Activated CD4-positive, alpha-beta T cell treated with anti-CD3 and anti-CD28 coated beads, Interleukin-2, amount 10 ng/mL, durations not matched to agents 24 days and 14 days (primary cell): ENCODE measurements at regions of chr19 and their contacts with region 1.

Region 1: DNA sequence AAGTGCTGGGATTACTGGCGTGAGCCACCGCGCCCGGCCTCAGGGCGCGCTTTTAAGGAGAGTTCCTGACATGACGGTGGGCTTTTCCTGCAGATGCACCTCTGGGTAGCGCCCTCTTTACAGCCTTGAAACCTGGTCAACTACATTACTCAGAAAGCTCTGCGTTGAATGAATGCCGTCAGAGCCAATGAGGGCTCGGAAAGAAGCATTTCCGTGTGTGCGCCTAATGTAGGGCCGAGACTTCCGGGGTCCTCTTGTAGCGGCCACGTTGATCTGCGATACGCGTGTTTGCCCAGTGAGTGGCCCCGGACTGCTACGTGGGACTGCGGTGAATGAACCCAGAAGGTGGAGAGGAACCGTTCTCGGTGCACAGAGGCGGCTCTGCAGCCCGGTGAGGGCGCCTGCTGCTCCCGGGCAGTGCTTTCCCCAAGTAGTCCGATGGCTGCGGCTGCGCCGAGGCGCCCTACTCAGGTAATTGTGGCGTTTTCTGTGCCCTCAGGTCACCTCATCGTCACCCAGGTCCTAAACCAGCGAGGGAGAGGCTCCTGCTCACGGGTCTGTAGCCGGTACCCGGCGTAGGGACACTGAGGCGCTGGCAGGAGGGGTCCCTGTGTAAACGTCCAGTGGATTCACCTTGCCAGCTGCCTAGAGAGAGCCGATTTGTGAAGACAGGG is 4.9 kb upstream of the ZNF552 start:
- DNase-seq: peak; percentile 94
- H3K4me3 Mint-ChIP-seq: peak overlapping the region; percentile 96
- H3K27ac Mint-ChIP-seq: peak overlapping the region; percentile 99
- H3K4me1 Mint-ChIP-seq: peaks cover 45% of the 10 kb centered on the region
- H3K27me3 Mint-ChIP-seq: no peaks in the 10 kb centered on the region

Region 2: GRCh38 chr19:57578487-57579205 is 241.0 kb before region 1 on chr19 and contains the start of gene ZNF416:
- intact Hi-C with region 1: loop called (anchors 10 kb)
- DNase-seq: peak; percentile 98
- H3K4me3 Mint-ChIP-seq: peak within 1 kb of the TSS; percentile 84
- H3K27ac Mint-ChIP-seq: peak within 1 kb of the TSS; percentile 73
- H3K4me1 Mint-ChIP-seq: peaks cover 19% of the 10 kb centered on the region
- H3K27me3 Mint-ChIP-seq: no peaks in the 10 kb centered on the region
- total RNA-seq, gene ZNF416: 3.4 and 3.5 TPM in 2 replicates

Region 3: GRCh38 chr19:57746580-57747471 is 72.8 kb before region 1 on chr19 and contains the start of gene ZNF776:
- intact Hi-C with region 1: loop called (anchors 2 kb)
- DNase-seq: peak; percentile 95
- H3K4me3 Mint-ChIP-seq: peak within 1 kb of the TSS; percentile 96
- H3K27ac Mint-ChIP-seq: peak within 1 kb of the TSS; percentile 97
- H3K4me1 Mint-ChIP-seq: peaks cover 16% of the 10 kb centered on the region
- H3K27me3 Mint-ChIP-seq: no peaks in the 10 kb centered on the region
- total RNA-seq, gene ZNF776: 7.5 and 7.9 TPM in 2 replicates

Region 4: DNA sequence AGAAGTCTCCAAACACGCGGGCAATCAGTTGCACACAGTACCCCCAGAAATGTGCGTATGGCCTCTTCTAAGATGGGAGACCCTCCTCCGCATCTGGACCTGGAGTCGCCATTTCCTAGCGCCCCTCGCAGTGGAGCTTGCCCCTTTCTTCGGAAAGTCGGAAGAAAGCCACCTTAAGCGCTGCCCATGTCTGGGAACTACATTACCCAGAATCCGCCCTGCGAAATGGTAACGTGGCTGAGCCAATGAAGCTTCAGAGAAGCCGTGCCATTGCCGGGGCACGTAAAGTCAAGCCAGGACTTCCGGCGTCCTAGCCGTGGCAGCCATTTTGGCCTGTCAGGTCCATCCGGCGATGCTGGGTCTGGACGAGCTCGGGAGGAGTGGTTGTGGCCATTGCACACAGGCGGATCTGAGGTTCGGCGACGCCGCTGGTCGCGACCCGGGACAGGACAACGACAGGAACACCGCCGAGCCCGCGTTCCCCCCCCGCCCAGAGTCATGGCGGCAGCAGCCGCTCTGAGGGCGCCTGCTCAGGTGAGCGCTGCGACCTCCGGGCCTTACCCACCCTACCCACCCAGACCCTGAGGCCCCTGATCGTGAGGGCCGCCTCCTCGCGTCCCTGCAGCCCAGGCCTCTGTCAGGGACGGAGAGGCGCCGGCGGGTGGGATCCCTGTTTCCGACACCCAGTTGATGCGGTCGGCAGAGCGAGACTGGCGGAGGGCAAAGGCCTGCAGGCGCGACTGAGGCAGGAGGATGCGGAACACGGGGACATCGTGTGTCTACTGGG is 50.1 kb before region 1 on chr19 and contains the start of gene ZNF586:
- intact Hi-C with region 1: loop called (anchors 2 kb)
- DNase-seq: peak; percentile 96
- H3K4me3 Mint-ChIP-seq: peak within 1 kb of the TSS; percentile 91
- H3K27ac Mint-ChIP-seq: peak within 1 kb of the TSS; percentile 92
- H3K4me1 Mint-ChIP-seq: peaks cover 13% of the 10 kb centered on the region
- H3K27me3 Mint-ChIP-seq: no peaks in the 10 kb centered on the region
- total RNA-seq, gene ZNF586: 11.5 and 13.5 TPM in 2 replicates

Region 5: DNA sequence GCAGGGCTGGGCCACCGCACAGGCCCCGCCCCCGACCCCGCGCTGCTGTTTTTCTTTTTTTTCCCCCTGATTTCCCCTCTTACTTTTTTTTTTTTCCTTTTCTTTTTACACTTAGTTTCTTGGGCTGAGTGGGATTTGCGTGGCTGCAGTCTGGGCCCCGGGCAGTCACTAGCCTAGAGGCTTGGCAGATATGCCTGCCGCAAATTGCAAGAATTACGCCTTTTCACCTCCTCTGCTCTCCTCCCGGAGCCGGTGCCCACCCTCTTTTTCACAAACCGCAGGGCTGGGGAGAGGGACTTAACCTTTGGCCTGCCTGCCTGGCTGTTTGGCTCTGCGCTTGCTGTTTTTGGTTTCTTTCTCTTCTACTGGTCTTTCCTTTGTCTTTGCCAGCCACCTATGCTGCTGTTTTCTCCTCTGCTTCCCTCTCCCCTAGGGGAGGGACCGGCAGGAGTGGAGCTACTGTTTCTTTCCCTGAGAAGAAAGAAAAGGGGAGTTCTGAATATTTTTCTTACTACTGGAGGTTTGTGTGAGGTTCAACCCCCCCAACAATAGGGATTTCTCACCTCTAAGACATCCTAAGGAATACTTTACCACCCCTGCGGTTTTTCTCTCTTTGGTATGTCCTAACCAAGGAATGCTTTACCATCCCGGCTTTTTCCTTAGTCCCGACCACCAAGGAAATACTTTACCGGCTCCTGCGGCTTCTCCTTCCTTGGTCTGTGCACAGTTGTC is 15.9 kb before region 1 on chr19:
- intact Hi-C with region 1: no loop called
- DNase-seq: no peak
- H3K4me3 Mint-ChIP-seq: peak overlapping the region; percentile 55
- H3K27ac Mint-ChIP-seq: no peak overlapping the region
- H3K4me1 Mint-ChIP-seq: peaks cover 12% of the 10 kb centered on the region
- H3K27me3 Mint-ChIP-seq: no peaks in the 10 kb centered on the region

Region 6: DNA sequence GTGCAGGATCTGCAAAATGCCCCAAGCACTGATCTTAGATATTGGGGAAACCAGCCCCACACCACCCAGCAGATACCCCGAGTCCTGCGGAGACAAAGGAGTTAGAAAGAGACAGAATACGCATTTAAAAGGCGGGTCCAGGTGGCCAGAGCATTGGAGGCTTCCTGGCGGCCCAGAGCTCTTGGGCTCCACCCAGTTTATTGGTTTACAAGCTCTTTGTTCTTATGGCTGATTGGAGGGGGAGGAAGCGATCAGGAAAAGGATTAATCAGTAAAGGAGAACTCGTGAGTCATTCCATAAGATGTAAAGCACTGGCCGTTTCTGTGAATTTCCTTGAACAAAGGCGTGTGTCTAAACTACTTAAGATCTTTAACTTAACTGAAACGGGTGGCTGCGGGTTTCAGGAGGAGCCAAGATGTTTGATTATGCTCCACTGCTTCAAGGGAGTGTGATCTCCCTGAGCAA is 31.0 kb after region 1 on chr19:
- intact Hi-C with region 1: loop called (anchors 2 kb)
- DNase-seq: peak; percentile 58
- H3K4me3 Mint-ChIP-seq: peak overlapping the region; percentile 93
- H3K27ac Mint-ChIP-seq: peak overlapping the region; percentile 93
- H3K4me1 Mint-ChIP-seq: peaks cover 23% of the 10 kb centered on the region
- H3K27me3 Mint-ChIP-seq: no peaks in the 10 kb centered on the region

Region 7: GRCh38 chr19:58182989-58183816 is 363.6 kb after region 1 on chr19 and contains the start of gene ZNF274:
- intact Hi-C with region 1: loop called (anchors 10 kb)
- DNase-seq: peak; percentile 98
- H3K4me3 Mint-ChIP-seq: peak within 1 kb of the TSS; percentile 97
- H3K27ac Mint-ChIP-seq: peak within 1 kb of the TSS; percentile 96
- H3K4me1 Mint-ChIP-seq: peaks cover 13% of the 10 kb centered on the region
- H3K27me3 Mint-ChIP-seq: no peaks in the 10 kb centered on the region
- total RNA-seq, gene ZNF274: 19.4 and 19.8 TPM in 2 replicates